Breast epithelium (tissue), 4 donors: ENCODE measurements at regions of chr7 and their contacts with region 1.

Region 1: GRCh38 chr7:2680792-2681490 is 7.1 kb upstream of the AMZ1 start:
- DNase-seq: peak; percentile 60 to 75
- H3K4me3 ChIP-seq: no peak overlapping the region
- H3K27ac ChIP-seq: no peak overlapping the region
- H3K4me1 ChIP-seq: no peaks in the 10 kb centered on the region
- H3K27me3 ChIP-seq: peaks cover 0 to 17% of the 10 kb centered on the region in 2 donors
- CTCF ChIP-seq: peak; percentile 26 to 73 (median 66)
- POLR2A ChIP-seq: no peak

Region 2: DNA sequence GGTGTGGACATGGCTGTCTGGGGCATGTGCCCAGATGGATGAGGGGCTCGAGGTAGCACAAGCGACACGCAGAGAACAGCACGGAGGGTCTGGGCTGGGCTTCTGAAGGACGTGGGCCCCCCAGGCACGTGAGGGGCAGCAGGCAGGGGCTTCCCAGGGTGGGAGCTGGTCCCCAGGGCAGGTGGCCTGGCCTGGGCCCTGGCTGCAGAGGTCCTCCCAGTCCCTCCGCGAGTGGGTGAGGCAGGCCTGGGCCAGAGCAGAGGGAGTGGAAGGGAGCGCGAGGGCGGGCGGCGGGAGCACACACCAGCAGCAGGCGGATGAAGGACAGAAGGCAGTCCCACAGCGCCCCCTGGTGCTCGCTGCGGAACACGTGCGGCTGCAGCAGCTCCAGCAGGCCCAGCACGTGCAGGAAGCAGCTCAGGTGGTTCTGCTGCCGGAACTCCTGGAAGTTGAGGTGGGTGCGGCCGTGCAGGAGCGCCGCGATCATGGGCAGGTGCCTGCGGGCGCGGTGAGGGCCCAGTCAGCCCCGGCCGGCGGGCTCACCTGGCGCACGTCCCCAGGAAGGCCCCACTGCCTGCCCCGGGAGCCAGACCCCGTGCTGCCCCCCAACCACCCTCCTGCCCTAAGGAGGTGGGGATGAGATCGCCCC is 1207.0 kb before region 1 on chr7:
- intact Hi-C with region 1: no loop called
- DNase-seq: peak; percentile 78 to 88
- H3K4me3 ChIP-seq: no peak overlapping the region
- H3K27ac ChIP-seq: peak overlapping the region in 1 of 2 donors; percentile 25
- H3K4me1 ChIP-seq: peaks cover 4 to 6% of the 10 kb centered on the region in 2 donors
- H3K27me3 ChIP-seq: no peaks in the 10 kb centered on the region
- CTCF ChIP-seq: peak; percentile 73 to 89 (median 85)
- POLR2A ChIP-seq: no peak

Region 3: GRCh38 chr7:2477447-2478398 is 203.2 kb before region 1 on chr7:
- intact Hi-C with region 1: loop called (anchors 10 kb)
- DNase-seq: no peak
- H3K4me3 ChIP-seq: peak overlapping the region in 1 of 3 donors; percentile 47
- H3K27ac ChIP-seq: peak overlapping the region; percentile 66 to 80
- H3K4me1 ChIP-seq: peaks cover 15 to 19% of the 10 kb centered on the region in 2 donors
- H3K27me3 ChIP-seq: no peaks in the 10 kb centered on the region
- CTCF ChIP-seq: peak; percentile 39 to 70 (median 70)
- POLR2A ChIP-seq: no peak

Region 4: GRCh38 chr7:2670720-2671391 is 10.1 kb before region 1 on chr7:
- intact Hi-C with region 1: no loop called
- DNase-seq: no peak
- H3K4me3 ChIP-seq: no peak overlapping the region
- H3K27ac ChIP-seq: no peak overlapping the region
- H3K4me1 ChIP-seq: no peaks in the 10 kb centered on the region
- H3K27me3 ChIP-seq: peaks cover 0 to 8% of the 10 kb centered on the region in 2 donors
- CTCF ChIP-seq: peak; percentile 47 to 72 (median 70)
- POLR2A ChIP-seq: no peak

Region 5: GRCh38 chr7:2698581-2699288 is 17.8 kb after region 1 on chr7:
- intact Hi-C with region 1: loop called (anchors 1 kb)
- DNase-seq: no peak
- H3K4me3 ChIP-seq: no peak overlapping the region
- H3K27ac ChIP-seq: no peak overlapping the region
- H3K4me1 ChIP-seq: no peaks in the 10 kb centered on the region
- H3K27me3 ChIP-seq: no peaks in the 10 kb centered on the region
- CTCF ChIP-seq: no peak
- POLR2A ChIP-seq: no peak